CD4-positive, alpha-beta memory T cell (primary cell): ENCODE measurements at regions of chr6 and their contacts with region 1.

Region 1: GRCh38 chr6:149233056-149233715 is 84.3 kb upstream of the TAB2 start:
- DNase-seq: peak; percentile 57 to 78 (median 74)
- H3K4me3 ChIP-seq: peak overlapping the region; percentile 2 to 18
- H3K4me3 Mint-ChIP-seq: peak overlapping the region; percentile 24 to 94 (median 82)
- H3K27ac ChIP-seq: peak overlapping the region; percentile 83
- H3K27ac Mint-ChIP-seq: peak overlapping the region; percentile 94 to 100 (median 98)
- H3K4me1 ChIP-seq: peaks cover 43% of the 10 kb centered on the region
- H3K4me1 Mint-ChIP-seq: peaks cover 44 to 68% (median 55%) of the 10 kb centered on the region in 4 donors
- H3K27me3 ChIP-seq: no peaks in the 10 kb centered on the region
- H3K27me3 Mint-ChIP-seq: no peaks in the 10 kb centered on the region

Region 2: GRCh38 chr6:149140137-149140909 is 92.9 kb before region 1 on chr6:
- CTCF ChIA-PET with region 1: no interaction called
- POLR2A ChIA-PET with region 1: interaction called, 4 read pairs
- intact Hi-C with region 1: loop called (anchors 2 kb)
- DNase-seq: peak; percentile 51 to 91 (median 64)
- H3K4me3 ChIP-seq: peak overlapping the region; percentile 6 to 47
- H3K4me3 Mint-ChIP-seq: peak overlapping the region; percentile 67 to 90 (median 76)
- H3K27ac ChIP-seq: peak overlapping the region; percentile 95
- H3K27ac Mint-ChIP-seq: peak overlapping the region; percentile 94 to 100 (median 99)
- H3K4me1 ChIP-seq: peaks cover 66% of the 10 kb centered on the region
- H3K4me1 Mint-ChIP-seq: peaks cover 31 to 61% (median 46%) of the 10 kb centered on the region in 4 donors
- H3K27me3 ChIP-seq: no peaks in the 10 kb centered on the region
- H3K27me3 Mint-ChIP-seq: no peaks in the 10 kb centered on the region

Region 3: GRCh38 chr6:149211046-149211571 is 22.1 kb before region 1 on chr6:
- CTCF ChIA-PET with region 1: no interaction called
- POLR2A ChIA-PET with region 1: interaction called, 9 read pairs
- intact Hi-C with region 1: loop called (anchors 1 kb)
- DNase-seq: no peak
- H3K4me3 ChIP-seq: no peak overlapping the region
- H3K4me3 Mint-ChIP-seq: peak overlapping the region in 7 of 8 donors; percentile 48 to 67 (median 52)
- H3K27ac ChIP-seq: no peak overlapping the region
- H3K27ac Mint-ChIP-seq: peak overlapping the region in 6 of 7 donors; percentile 65 to 89 (median 80)
- H3K4me1 ChIP-seq: peaks cover 49% of the 10 kb centered on the region
- H3K4me1 Mint-ChIP-seq: peaks cover 0 to 26% (median 16%) of the 10 kb centered on the region in 4 donors
- H3K27me3 ChIP-seq: no peaks in the 10 kb centered on the region
- H3K27me3 Mint-ChIP-seq: no peaks in the 10 kb centered on the region

Region 4: GRCh38 chr6:149264629-149265028 is 31.4 kb after region 1 on chr6:
- CTCF ChIA-PET with region 1: no interaction called
- POLR2A ChIA-PET with region 1: no interaction called
- intact Hi-C with region 1: loop called (anchors 1 kb)
- DNase-seq: peak; percentile 48 to 64 (median 55)
- H3K4me3 ChIP-seq: peak overlapping the region in 1 of 2 donors; percentile 8
- H3K4me3 Mint-ChIP-seq: peak overlapping the region in 6 of 8 donors; percentile 2 to 74 (median 58)
- H3K27ac ChIP-seq: no peak overlapping the region
- H3K27ac Mint-ChIP-seq: peak overlapping the region in 6 of 7 donors; percentile 20 to 86 (median 58)
- H3K4me1 ChIP-seq: peaks cover 42% of the 10 kb centered on the region
- H3K4me1 Mint-ChIP-seq: peaks cover 21 to 51% (median 35%) of the 10 kb centered on the region in 4 donors
- H3K27me3 ChIP-seq: no peaks in the 10 kb centered on the region
- H3K27me3 Mint-ChIP-seq: no peaks in the 10 kb centered on the region

Region 5: DNA sequence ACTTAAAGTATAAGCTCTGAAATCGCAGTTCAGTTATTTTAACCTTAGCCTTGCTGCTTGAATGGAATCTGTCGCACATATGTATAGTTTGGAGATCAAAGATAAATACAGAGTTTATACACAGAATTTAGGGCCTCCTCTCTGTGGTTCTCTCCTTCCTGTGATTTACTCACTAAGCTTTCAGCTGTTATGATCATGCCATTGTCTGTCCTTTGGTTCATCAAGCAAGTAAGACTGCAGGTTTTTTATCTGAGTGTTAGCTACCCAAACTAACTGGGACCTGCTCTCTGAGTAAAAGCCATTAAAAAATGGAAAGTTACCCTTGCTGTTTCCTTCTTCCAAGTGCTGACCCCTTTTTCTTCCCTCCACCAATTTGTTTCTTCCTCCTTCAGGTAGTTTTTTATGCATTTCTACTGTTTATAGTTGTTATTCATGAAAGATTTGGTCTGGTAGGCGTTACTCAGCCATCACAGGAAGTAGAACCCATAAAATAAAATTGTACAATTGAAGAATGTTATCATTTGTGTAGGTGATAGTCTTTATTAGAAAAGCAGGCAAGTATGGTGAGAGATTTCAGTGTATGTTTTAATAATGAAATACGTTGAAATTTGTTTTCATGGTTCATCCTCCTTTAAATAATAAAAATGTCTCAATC is 133.2 kb after region 1 on chr6:
- CTCF ChIA-PET with region 1: no interaction called
- POLR2A ChIA-PET with region 1: no interaction called
- intact Hi-C with region 1: loop called (anchors 1 kb)
- DNase-seq: peak in 4 of 5 donors; percentile 43 to 65 (median 50)
- H3K4me3 ChIP-seq: no peak overlapping the region
- H3K4me3 Mint-ChIP-seq: no peak overlapping the region
- H3K27ac ChIP-seq: peak overlapping the region; percentile 31
- H3K27ac Mint-ChIP-seq: no peak overlapping the region
- H3K4me1 ChIP-seq: peaks cover 93% of the 10 kb centered on the region
- H3K4me1 Mint-ChIP-seq: peaks cover 30 to 42% (median 37%) of the 10 kb centered on the region in 4 donors
- H3K27me3 ChIP-seq: no peaks in the 10 kb centered on the region
- H3K27me3 Mint-ChIP-seq: no peaks in the 10 kb centered on the region